Activated CD4-positive, alpha-beta T cell treated with anti-CD3 and anti-CD28 coated beads, Interleukin-2, amount 10 ng/mL, durations not matched to agents 24 days and 14 days (primary cell): ENCODE measurements at regions of chr2 and their contacts with region 1.

Region 1: DNA sequence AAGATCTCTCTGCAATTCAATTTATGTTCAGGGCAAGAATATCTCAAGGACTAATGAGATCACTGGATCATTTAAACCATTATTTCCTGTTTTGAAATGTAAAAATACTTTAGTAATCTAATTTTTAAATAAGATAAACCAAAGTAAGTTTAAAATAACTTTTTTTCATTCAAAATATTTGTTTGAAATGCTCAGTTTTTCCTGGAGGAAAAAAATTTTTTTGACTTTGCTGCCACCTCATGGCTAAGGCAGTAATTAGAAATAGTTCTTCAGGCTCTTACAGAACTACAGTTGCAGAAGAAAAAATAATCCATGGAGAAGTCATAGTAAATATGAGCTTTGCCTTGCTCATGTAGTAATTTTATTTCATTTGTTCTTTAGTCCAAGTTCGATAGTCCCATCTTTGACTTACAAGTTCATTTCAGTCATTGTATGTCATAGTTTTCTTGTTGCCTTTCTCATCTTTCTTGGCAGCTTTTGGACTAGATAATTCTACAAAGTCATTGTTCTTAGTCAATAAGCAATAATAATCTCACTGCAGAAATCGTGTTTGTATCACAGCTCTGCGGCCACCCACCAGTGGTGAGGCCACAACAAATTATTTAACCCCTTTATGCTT is 127.4 kb downstream of the DPP4 start:
- DNase-seq: peak; percentile 77
- H3K4me3 Mint-ChIP-seq: no peak overlapping the region
- H3K27ac Mint-ChIP-seq: no peak overlapping the region
- H3K4me1 Mint-ChIP-seq: peaks cover 29% of the 10 kb centered on the region
- H3K27me3 Mint-ChIP-seq: peaks cover 9% of the 10 kb centered on the region

Region 2: DNA sequence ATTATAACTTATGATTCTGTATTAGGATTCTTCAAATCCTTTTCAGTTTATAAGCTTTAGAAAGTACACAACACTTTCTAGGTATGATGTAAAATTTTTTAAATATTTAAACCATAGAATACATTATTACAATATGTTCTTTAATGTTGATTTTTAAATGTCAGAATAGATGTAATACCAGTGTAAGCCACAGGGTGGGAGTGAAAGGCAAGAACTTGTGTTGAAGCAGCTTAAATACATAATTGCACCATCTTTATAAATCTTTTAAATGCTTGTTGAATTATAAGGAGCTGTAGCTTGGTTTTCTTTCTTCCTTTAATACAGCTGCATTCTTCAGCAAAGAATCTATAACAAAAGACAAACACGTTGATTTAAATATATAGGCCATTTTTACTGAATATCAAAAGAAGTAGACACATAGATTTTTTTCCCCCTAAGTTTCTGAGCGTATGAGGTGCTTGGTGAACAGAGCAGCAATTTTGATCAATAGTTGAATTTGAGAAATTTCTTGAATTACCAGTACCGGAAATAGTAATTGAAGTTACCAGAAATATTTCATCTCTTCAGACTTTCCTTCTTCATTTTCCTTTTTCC is 723.4 kb before region 1 on chr2:
- intact Hi-C with region 1: loop called (anchors 5 kb)
- DNase-seq: peak; percentile 71
- H3K4me3 Mint-ChIP-seq: no peak overlapping the region
- H3K27ac Mint-ChIP-seq: no peak overlapping the region
- H3K4me1 Mint-ChIP-seq: peaks cover 7% of the 10 kb centered on the region
- H3K27me3 Mint-ChIP-seq: no peaks in the 10 kb centered on the region

Region 3: GRCh38 chr2:161273038-161273760 is 673.4 kb before region 1 on chr2:
- intact Hi-C with region 1: loop called (anchors 10 kb)
- DNase-seq: peak; percentile 83
- H3K4me3 Mint-ChIP-seq: no peak overlapping the region
- H3K27ac Mint-ChIP-seq: no peak overlapping the region
- H3K4me1 Mint-ChIP-seq: peaks cover 2% of the 10 kb centered on the region
- H3K27me3 Mint-ChIP-seq: peaks cover 17% of the 10 kb centered on the region

Region 4: DNA sequence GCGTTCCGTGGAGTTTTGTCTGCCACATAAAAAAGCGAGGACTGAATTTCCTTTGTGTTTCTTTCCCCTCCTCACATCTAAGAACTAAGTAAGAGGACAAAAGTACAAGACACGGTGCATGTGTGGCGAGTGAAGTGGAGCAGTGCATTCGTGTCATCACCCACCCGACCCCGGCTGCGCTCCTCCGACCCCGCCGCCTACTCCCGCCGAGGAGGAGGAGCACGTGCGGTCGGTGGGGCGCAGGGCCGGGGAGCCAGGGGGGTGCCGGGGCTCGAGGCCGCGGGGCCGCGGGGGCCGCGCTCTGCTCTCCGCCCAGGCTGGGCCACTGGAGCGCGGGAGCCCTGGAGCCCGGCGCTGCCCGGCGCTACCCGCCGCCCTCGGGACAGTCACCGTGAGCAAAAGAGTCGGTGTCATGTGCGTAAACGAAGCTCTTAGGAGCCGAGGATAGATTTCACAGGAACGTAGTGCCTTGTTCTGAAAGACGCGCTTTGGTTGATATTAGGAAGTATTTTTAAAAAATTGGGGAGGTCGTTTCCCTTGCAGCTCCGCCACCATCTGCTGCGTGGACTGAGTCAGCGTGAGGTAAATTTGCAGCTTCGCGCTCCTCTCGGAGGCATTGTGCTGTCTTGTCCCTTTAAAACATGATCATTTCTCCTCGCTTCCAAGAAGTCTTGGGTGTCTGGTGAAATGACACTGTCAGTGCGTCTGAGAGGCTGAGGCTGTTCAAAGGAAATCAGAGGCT is 519.5 kb before region 1 on chr2:
- intact Hi-C with region 1: loop called (anchors 5 kb)
- DNase-seq: peak; percentile 75
- H3K4me3 Mint-ChIP-seq: peak overlapping the region; percentile 72
- H3K27ac Mint-ChIP-seq: peak overlapping the region; percentile 60
- H3K4me1 Mint-ChIP-seq: peaks cover 23% of the 10 kb centered on the region
- H3K27me3 Mint-ChIP-seq: peaks cover 84% of the 10 kb centered on the region

Region 5: DNA sequence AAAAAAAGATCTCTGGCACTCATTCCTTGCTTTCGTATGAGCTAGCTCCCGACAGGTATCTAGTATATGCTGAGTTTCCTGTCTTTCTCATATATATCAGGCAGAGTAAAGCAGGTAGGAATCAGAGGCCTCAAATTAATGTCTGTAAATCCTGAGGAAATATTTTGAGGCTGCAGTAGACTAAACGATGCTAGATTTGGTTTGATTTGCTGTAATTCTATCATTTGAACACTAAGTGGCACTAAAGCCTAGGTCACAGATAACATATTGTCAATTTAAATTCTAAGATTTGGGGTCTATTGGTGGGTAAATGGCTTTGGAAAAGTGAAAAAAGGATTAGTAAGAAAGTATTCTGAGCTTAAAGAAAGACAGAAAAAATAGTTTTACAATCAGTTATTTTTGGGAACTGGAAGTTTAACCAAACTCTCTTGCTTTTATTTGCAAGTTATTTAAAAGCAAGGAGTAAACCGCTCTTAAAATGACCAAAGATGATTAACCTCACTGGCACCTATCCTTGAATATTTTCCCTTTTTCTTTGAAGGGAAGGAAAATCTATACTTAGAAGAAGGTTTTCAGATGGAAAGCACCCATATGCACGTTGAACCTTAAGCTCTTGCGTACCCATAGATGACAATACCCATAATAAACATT is 360.0 kb before region 1 on chr2:
- intact Hi-C with region 1: loop called (anchors 1 kb)
- DNase-seq: no peak
- H3K4me3 Mint-ChIP-seq: no peak overlapping the region
- H3K27ac Mint-ChIP-seq: no peak overlapping the region
- H3K4me1 Mint-ChIP-seq: no peaks in the 10 kb centered on the region
- H3K27me3 Mint-ChIP-seq: peaks cover 23% of the 10 kb centered on the region

Region 6: DNA sequence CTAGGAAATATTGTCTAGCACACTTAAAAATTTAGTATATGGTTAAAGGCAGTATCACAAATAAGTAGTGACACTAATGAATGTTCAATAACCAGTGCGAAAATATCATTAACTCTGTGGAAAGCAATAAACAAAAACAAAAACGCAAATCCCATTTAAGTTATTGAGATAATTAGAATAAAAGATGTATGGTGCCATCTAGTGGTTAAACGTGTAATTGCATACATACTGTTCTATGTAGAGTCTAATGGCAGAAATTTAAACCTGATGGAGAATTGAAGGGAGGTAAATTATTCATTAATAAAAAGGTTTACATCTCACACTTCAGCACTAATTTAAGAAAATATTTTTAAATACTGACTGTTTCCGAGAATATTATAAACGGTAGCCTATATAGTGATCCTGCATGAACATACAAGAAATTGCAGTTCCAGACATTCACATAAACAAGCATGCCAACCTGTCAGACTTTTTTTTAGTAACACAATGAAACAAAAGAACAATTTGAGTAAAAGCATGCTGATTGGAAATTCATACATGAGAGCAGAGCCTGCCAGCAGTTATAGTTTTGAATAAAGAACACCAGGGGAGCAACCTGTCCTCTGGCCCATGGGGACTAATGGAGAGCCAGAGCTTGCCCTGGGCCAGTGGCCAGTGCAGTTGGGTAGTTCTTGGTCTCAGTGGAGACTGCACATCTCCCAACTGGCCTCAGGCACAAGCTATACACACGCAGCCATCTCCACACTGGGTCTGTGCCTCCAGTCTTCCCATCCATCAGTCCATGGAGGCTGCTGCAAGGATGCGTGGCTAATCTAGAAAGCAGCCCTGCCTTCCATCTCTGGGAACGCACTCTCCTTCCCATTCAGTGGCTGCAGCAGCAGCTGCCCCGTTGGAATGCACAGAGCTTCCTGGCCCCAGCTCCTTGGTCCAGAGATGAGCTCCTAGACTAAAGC is 177.5 kb after region 1 on chr2:
- intact Hi-C with region 1: loop called (anchors 1 kb)
- DNase-seq: peak; percentile 73
- H3K4me3 Mint-ChIP-seq: no peak overlapping the region
- H3K27ac Mint-ChIP-seq: no peak overlapping the region
- H3K4me1 Mint-ChIP-seq: peaks cover 16% of the 10 kb centered on the region
- H3K27me3 Mint-ChIP-seq: peaks cover 7% of the 10 kb centered on the region